ENCODE measurements at regions of chr15 and their contacts with region 1.

Region 1: DNA sequence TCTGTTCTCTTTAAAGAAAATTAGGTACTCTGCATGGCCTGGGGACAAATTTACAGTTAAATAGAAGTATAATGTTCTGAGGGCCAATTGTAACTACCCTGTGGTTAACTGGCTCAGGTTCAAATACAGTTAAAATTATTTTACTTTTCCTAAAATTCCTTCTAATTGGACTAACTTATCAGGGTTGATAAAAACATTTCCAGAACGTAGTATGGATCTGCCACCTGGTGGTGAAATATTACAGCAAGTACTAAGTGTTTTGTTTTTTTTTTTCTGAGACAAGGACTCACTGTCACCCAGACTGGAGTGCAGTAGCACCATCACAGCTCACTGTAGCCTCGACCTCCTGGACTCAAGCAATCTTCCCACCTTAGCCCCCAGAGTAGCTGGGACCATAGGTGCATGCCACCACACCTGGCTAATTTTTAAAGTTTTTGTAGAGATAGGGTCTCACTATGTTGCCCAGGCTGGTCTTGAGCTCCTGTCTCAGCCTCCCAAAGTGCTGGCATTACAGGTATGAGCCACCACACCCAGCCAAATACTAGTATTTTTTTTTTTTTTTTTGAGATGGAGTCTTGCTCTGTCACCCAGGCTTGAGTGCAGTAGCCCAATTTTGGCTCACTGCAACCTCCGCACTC is 29.2 kb downstream of the NEO1 start:
- DNase-seq: peak in 1 of 2 donors; percentile 8
- ATAC-seq: peak; percentile 51 to 84 (median 76)
- H3K4me3 ChIP-seq: no peak overlapping the region
- H3K27ac ChIP-seq: no peak overlapping the region
- H3K4me1 ChIP-seq: peaks cover 33% of the 10 kb centered on the region
- H3K27me3 ChIP-seq: no peaks in the 10 kb centered on the region
- CTCF ChIP-seq: peak; percentile 76

Region 2: GRCh38 chr15:72722071-72722696 is 359.3 kb before region 1 on chr15:
- intact Hi-C with region 1: loop called in 1 of 2 experiments (anchors 5 kb)
- DNase-seq: peak; percentile 32 to 73
- ATAC-seq: peak; percentile 68 to 91 (median 78)
- H3K4me3 ChIP-seq: no peak overlapping the region
- H3K27ac ChIP-seq: no peak overlapping the region
- H3K4me1 ChIP-seq: peaks cover 11% of the 10 kb centered on the region
- H3K27me3 ChIP-seq: no peaks in the 10 kb centered on the region
- CTCF ChIP-seq: peak; percentile 66

Region 3: GRCh38 chr15:72796515-72797337 is 284.7 kb before region 1 on chr15:
- intact Hi-C with region 1: loop called (anchors 1 to 2 kb)
- DNase-seq: peak; percentile 78
- ATAC-seq: peak; percentile 92 to 98 (median 95)
- H3K4me3 ChIP-seq: peak overlapping the region; percentile 81
- H3K27ac ChIP-seq: peak overlapping the region; percentile 78
- H3K4me1 ChIP-seq: peaks cover 3% of the 10 kb centered on the region
- H3K27me3 ChIP-seq: no peaks in the 10 kb centered on the region
- CTCF ChIP-seq: peak; percentile 79

Region 4: DNA sequence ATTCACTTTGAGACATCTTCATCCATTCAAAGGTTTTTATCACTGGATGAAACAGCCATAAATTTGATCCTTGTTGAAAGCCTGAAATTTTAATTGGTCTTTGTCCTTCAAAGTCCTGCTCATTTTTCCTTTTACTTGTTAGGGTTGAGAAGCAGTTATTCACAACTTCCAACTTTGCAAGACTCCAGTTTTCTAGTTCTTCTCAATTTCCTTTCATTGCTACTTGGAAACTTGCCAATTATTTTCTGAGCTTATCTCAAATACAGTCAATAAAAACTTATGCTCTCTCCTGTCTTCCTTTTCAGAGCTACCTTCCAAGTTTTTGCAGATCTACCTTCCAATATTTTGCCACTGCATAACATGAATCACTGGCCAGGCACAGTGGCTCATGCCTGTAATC is 579.0 kb after region 1 on chr15:
- intact Hi-C with region 1: no loop called
- DNase-seq: no peak
- ATAC-seq: no peak
- H3K4me3 ChIP-seq: no peak overlapping the region
- H3K27ac ChIP-seq: no peak overlapping the region
- H3K4me1 ChIP-seq: no peaks in the 10 kb centered on the region
- H3K27me3 ChIP-seq: peaks cover 0 to 6% (median 0%) of the 10 kb centered on the region in 3 donors
- CTCF ChIP-seq: no peak